H1 (cell line): ENCODE measurements at regions of chr2 and their contacts with region 1.

Region 1: DNA sequence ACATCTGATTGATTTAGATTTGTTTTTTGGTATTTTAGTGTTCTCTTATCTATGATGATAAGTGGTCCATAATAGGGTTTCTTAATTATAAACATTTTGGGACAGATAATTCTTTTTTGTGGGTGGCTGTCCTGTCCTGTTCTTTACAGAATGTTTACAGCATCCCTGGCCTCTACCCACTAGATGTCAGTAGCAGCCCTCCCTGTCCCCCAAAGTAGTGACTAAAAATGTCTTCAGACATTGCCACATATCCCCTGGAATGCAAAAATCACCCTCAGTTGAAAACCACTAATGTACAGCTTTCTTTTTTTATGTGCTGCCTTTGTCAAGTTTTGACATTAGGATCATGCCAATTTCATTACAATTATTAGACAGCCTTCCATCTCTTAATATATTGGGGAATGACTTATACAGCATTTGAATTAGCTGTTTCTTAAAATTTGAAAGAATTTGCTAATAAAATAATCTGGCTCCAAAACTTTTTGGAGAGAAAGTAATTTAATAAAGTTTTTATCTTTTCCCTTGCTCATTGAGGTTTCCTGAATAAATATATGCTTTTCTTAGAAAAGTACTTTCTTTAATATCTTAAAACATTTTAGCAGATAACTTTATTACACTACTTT is 19.5 kb downstream of the WIPF1 start:
- DNase-seq: no peak
- H3K4me3 ChIP-seq: no peak overlapping the region
- H3K27ac ChIP-seq: no peak overlapping the region
- H3K4me1 ChIP-seq: no peaks in the 10 kb centered on the region
- H3K27me3 ChIP-seq: no peaks in the 10 kb centered on the region
- CTCF ChIP-seq: peak; percentile 27 to 65 (median 57)
- EP300 ChIP-seq: no peak
- POLR2A ChIP-seq: no peak
- RAD21 ChIP-seq: peak; percentile 81 to 83

Region 2: DNA sequence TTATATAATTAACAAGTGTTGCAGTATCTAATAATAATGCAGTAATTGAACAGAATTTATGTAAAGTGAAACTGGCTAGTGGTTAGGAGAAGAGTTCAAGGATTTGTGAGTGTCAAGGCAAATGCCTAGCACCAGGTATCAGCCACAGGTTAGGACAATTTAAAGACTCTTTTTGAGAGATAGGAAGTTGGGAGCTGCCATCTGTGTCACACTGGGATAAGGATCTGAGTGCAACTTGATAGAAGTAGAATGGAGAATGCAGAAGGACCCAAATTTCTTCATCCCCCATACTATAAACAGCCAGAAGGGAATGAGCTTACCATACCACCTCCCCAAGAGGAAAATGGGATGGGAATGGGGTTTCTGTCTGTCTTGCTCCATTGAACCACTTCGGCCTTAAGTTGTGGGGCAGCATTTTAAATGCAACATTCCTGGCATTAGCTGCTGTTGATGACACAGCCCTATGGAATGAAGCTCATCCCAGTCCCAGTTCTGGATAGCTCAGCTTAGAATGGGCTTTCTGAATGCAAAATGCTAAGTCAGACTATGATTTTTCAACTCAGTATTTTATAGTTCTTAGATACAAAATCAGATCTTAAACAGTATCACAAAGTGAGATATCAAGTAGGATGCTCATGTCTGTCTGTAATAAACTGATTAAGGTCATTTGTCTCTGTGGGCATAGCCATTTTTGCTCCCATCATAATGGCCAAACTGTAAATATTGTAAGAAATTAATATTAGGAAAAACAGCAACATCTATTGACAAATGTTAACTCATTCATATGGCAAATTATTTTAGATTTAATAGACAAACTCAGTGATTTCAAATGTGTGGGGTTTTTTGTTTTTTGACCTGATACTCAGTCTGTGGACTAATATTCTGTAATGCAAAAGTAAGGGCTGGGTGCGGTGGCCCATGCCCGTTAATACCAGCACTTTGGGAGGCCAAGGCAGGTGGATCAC is 135.2 kb before region 1 on chr2:
- CTCF ChIA-PET with region 1: no interaction called
- POLR2A ChIA-PET with region 1: no interaction called
- DNase-seq: no peak
- H3K4me3 ChIP-seq: no peak overlapping the region
- H3K27ac ChIP-seq: no peak overlapping the region
- H3K4me1 ChIP-seq: no peaks in the 10 kb centered on the region
- H3K27me3 ChIP-seq: no peaks in the 10 kb centered on the region
- CTCF ChIP-seq: no peak
- EP300 ChIP-seq: no peak
- POLR2A ChIP-seq: no peak
- RAD21 ChIP-seq: no peak

Region 3: DNA sequence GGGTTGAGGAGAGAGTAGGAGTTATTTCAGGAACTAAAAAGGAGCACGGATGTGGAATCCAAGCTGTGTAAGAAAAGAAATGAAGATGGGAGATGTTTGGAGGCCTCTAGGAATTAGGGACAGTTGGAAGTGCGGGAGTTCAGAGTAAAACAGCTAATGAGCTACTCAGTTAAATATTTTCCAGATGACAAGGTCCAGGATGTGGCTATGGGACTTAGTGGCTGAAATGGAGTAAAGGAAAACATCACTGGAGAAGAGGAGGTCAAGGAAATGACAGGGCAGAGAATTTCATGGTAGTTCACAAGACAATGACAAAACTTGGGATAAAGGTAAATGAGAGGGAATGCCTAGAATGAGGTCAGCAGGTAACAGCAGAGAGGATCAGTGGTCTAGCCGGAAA is 104.3 kb before region 1 on chr2:
- CTCF ChIA-PET with region 1: no interaction called
- POLR2A ChIA-PET with region 1: no interaction called
- DNase-seq: no peak
- H3K4me3 ChIP-seq: no peak overlapping the region
- H3K27ac ChIP-seq: no peak overlapping the region
- H3K4me1 ChIP-seq: no peaks in the 10 kb centered on the region
- H3K27me3 ChIP-seq: no peaks in the 10 kb centered on the region
- CTCF ChIP-seq: no peak
- EP300 ChIP-seq: no peak
- POLR2A ChIP-seq: no peak
- RAD21 ChIP-seq: no peak

Region 4: GRCh38 chr2:174512345-174512744 is 65.7 kb before region 1 on chr2:
- CTCF ChIA-PET with region 1: no interaction called
- POLR2A ChIA-PET with region 1: no interaction called
- DNase-seq: no peak
- H3K4me3 ChIP-seq: no peak overlapping the region
- H3K27ac ChIP-seq: no peak overlapping the region
- H3K4me1 ChIP-seq: no peaks in the 10 kb centered on the region
- H3K27me3 ChIP-seq: no peaks in the 10 kb centered on the region
- CTCF ChIP-seq: no peak
- EP300 ChIP-seq: no peak
- POLR2A ChIP-seq: no peak
- RAD21 ChIP-seq: no peak

Region 5: GRCh38 chr2:174603280-174603679 is 25.2 kb after region 1 on chr2:
- CTCF ChIA-PET with region 1: interaction called, 14 read pairs
- POLR2A ChIA-PET with region 1: no interaction called
- DNase-seq: no peak
- H3K4me3 ChIP-seq: no peak overlapping the region
- H3K27ac ChIP-seq: no peak overlapping the region
- H3K4me1 ChIP-seq: no peaks in the 10 kb centered on the region
- H3K27me3 ChIP-seq: no peaks in the 10 kb centered on the region
- CTCF ChIP-seq: peak in 2 of 3 experiments; percentile 52 to 67; a peak in 3 of 4 replicates
- EP300 ChIP-seq: no peak
- POLR2A ChIP-seq: no peak
- RAD21 ChIP-seq: peak; percentile 49 to 67; a peak in 3 of 4 replicates

Region 6: DNA sequence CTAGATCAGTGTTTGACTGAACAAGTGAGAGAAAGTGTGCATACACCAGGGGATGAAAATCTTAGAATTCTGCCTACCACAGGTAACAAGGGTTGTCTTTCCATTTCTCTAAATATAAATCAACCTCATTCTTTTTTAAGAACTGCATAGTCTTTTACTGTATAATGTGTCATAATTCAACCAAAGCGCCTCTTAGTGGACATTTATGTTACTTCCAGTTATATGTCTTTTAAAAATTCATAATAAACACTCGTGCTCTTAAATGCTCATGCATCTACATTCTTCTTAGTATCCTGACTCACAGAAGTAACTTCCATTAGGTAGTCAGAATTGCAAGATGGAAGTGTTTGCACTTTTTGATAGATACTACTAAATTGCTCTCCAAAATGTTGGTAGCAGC is 110.0 kb after region 1 on chr2:
- CTCF ChIA-PET with region 1: interaction called, 28 read pairs
- POLR2A ChIA-PET with region 1: no interaction called
- DNase-seq: no peak
- H3K4me3 ChIP-seq: no peak overlapping the region
- H3K27ac ChIP-seq: no peak overlapping the region
- H3K4me1 ChIP-seq: peaks cover under 1 to 6% (median 2%) of the 10 kb centered on the region in 4 experiments; a peak in 4 of 7 replicates
- H3K27me3 ChIP-seq: peaks cover 0 to 11% (median 5%) of the 10 kb centered on the region in 4 experiments; a peak in 6 of 7 replicates
- CTCF ChIP-seq: no peak; a peak in 1 of 4 replicates
- EP300 ChIP-seq: no peak
- POLR2A ChIP-seq: no peak
- RAD21 ChIP-seq: no peak; a peak in 1 of 4 replicates